Transverse colon (tissue), 4 donors: ENCODE measurements at regions of chr4 and their contacts with region 1.

Region 1: GRCh38 chr4:94390804-94391410 is 48.3 kb upstream of the HPGDS start:
- DNase-seq: no peak
- H3K4me3 ChIP-seq: no peak overlapping the region
- H3K27ac ChIP-seq: no peak overlapping the region
- H3K4me1 ChIP-seq: no peaks in the 10 kb centered on the region
- H3K27me3 ChIP-seq: no peaks in the 10 kb centered on the region
- CTCF ChIP-seq: peak; percentile 32 to 51 (median 37)
- EP300 ChIP-seq: no peak
- POLR2A ChIP-seq: no peak

Region 2: GRCh38 chr4:93791570-93792195 is 599.2 kb before region 1 on chr4:
- in situ Hi-C with region 1: loop called in 1 of 4 experiments (anchors 25 kb)
- intact Hi-C with region 1: no loop called
- DNase-seq: peak; percentile 64
- H3K4me3 ChIP-seq: no peak overlapping the region
- H3K27ac ChIP-seq: no peak overlapping the region
- H3K4me1 ChIP-seq: peaks cover 0 to 6% (median 0%) of the 10 kb centered on the region in 4 donors
- H3K27me3 ChIP-seq: no peaks in the 10 kb centered on the region
- CTCF ChIP-seq: peak; percentile 70 to 82 (median 74)
- EP300 ChIP-seq: no peak
- POLR2A ChIP-seq: no peak